Right ventricle myocardium inferior (tissue), 1 donor: ENCODE measurements at regions of chr20 and their contacts with region 1.

Region 1: GRCh38 chr20:36460648-36461599 is 80.4 kb upstream of the MYL9 start:
- DNase-seq: peak; percentile 97
- ATAC-seq: peak; percentile 76

Region 2: GRCh38 chr20:36499723-36500501 is 39.0 kb after region 1 on chr20:
- intact Hi-C with region 1: loop called (anchors 5 kb)
- DNase-seq: no peak
- ATAC-seq: no peak

Region 3: GRCh38 chr20:36541227-36541763 is 80.4 kb after region 1 on chr20 and contains the start of gene MYL9:
- intact Hi-C with region 1: loop called (anchors 2 kb)
- DNase-seq: peak; percentile 97
- ATAC-seq: peak; percentile 91
- total RNA-seq, gene MYL9: 1,923 TPM

Region 4: GRCh38 chr20:36941401-36941835 is 480.5 kb after region 1 on chr20:
- intact Hi-C with region 1: loop called (anchors 10 kb)
- DNase-seq: no peak
- ATAC-seq: no peak